PC-3 (cell line): ENCODE measurements at regions of chr19 and their contacts with region 1.

Region 1: GRCh38 chr19:43950834-43951645 is at the start of gene ZNF221:
- DNase-seq: peak; percentile 93
- ATAC-seq: peak; percentile 96
- H3K4me3 ChIP-seq: peak within 1 kb of the TSS; percentile 85
- H3K27ac ChIP-seq: no peak within 1 kb of the TSS
- H3K4me1 ChIP-seq: no peaks in the 10 kb centered on the region
- H3K27me3 ChIP-seq: no peaks in the 10 kb centered on the region
- CTCF ChIP-seq: peak; percentile 53
- total RNA-seq, gene ZNF221: 0.55 and 2.1 TPM in 2 replicates

Region 2: DNA sequence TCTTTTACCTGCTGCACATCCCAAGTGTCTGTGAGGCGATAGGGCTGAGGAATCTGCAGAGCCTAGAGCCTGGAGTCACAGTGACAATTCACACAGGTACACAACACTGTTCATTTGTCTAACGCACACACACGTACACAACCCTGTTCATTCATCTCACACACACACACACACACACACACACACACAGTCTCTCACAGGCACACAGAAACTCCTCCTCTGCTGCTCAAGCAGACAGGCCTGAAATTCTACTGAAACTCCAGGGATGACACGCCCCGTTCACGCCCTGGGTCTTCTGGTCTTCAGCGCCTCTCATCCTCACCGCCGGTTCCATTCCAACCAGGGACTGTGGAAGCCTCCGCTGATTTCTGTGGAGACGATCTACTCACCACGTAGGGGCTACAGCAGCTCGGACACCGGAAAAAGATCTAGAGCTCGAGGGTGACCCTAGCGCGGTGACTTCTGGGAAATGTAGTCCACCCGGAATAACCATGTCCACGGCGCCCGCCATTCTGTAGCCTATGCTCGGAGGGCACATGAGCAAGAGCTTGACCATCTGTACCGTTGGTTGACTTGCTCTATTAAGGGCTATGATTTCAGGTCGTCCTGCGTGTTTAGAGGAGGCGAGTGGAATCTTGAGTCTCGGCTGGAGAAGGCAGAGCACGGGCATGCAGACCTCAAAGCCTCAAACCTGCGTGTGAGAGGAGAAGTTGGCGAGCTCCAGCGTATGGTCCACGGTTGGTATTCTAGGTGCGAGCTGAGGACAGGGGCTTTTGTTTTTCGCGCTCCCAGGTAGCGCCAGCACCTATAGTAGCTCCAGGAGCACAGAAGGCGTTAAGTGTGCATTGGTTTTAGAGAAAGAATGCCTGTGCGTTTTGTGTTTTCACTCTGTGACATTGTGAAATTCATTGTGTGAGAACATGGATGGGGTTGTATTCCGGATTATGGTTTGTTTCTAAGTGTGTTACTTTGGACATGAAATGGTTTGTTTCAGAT is 49.3 kb before region 1 on chr19:
- CTCF ChIA-PET with region 1: no interaction called
- POLR2A ChIA-PET with region 1: no interaction called
- intact Hi-C with region 1: no loop called
- DNase-seq: no peak
- ATAC-seq: no peak
- H3K4me3 ChIP-seq: no peak overlapping the region
- H3K27ac ChIP-seq: no peak overlapping the region
- H3K4me1 ChIP-seq: no peaks in the 10 kb centered on the region
- H3K27me3 ChIP-seq: no peaks in the 10 kb centered on the region
- CTCF ChIP-seq: no peak

Region 3: GRCh38 chr19:43934985-43935708 is 15.9 kb before region 1 on chr19 and contains the start of gene ZNF45:
- CTCF ChIA-PET with region 1: interaction called, 4 read pairs
- POLR2A ChIA-PET with region 1: no interaction called
- intact Hi-C with region 1: loop called (anchors 2 kb)
- DNase-seq: peak; percentile 80
- ATAC-seq: peak; percentile 94
- H3K4me3 ChIP-seq: peak within 1 kb of the TSS; percentile 90
- H3K27ac ChIP-seq: no peak within 1 kb of the TSS
- H3K4me1 ChIP-seq: peaks cover 7% of the 10 kb centered on the region; the same call in 1 of the 2 replicates
- H3K27me3 ChIP-seq: no peaks in the 10 kb centered on the region
- CTCF ChIP-seq: no peak
- total RNA-seq, gene ZNF45: 5.8 and 7.8 TPM in 2 replicates

Region 4: GRCh38 chr19:44113138-44113783 is 162.2 kb after region 1 on chr19 and contains the start of gene ZNF225:
- CTCF ChIA-PET with region 1: no interaction called
- POLR2A ChIA-PET with region 1: no interaction called
- intact Hi-C with region 1: no loop called
- DNase-seq: peak; percentile 97
- ATAC-seq: peak; percentile 98
- H3K4me3 ChIP-seq: peak within 1 kb of the TSS; percentile 99
- H3K27ac ChIP-seq: no peak within 1 kb of the TSS
- H3K4me1 ChIP-seq: peaks cover 9% of the 10 kb centered on the region
- H3K27me3 ChIP-seq: no peaks in the 10 kb centered on the region
- CTCF ChIP-seq: no peak
- total RNA-seq, gene ZNF225: 0.46 and 1.6 TPM in 2 replicates

Region 5: GRCh38 chr19:44228318-44228717 is 277.3 kb after region 1 on chr19:
- CTCF ChIA-PET with region 1: no interaction called
- POLR2A ChIA-PET with region 1: no interaction called
- intact Hi-C with region 1: no loop called
- DNase-seq: no peak
- ATAC-seq: no peak
- H3K4me3 ChIP-seq: no peak overlapping the region
- H3K27ac ChIP-seq: no peak overlapping the region
- H3K4me1 ChIP-seq: no peaks in the 10 kb centered on the region
- H3K27me3 ChIP-seq: no peaks in the 10 kb centered on the region
- CTCF ChIP-seq: no peak